ENCODE measurements at regions of chr17 and their contacts with region 1.

Region 1: GRCh38 chr17:38421171-38421841 is 7.0 kb upstream of the ARHGAP23 start:
- DNase-seq: no peak
- H3K4me3 Mint-ChIP-seq: no peak overlapping the region
- H3K27ac Mint-ChIP-seq: no peak overlapping the region
- H3K4me1 Mint-ChIP-seq: peaks cover 29% of the 10 kb centered on the region
- H3K27me3 Mint-ChIP-seq: peaks cover 98% of the 10 kb centered on the region
- CTCF ChIP-seq: no peak

Region 2: GRCh38 chr17:38434178-38434665 is 12.9 kb after region 1 on chr17:
- CTCF ChIA-PET with region 1: interaction called, 10 read pairs
- intact Hi-C with region 1: no loop called
- DNase-seq: no peak
- H3K4me3 Mint-ChIP-seq: no peak overlapping the region
- H3K27ac Mint-ChIP-seq: no peak overlapping the region
- H3K4me1 Mint-ChIP-seq: no peaks in the 10 kb centered on the region
- H3K27me3 Mint-ChIP-seq: peaks cover 53% of the 10 kb centered on the region
- CTCF ChIP-seq: no peak

Region 3: GRCh38 chr17:38444151-38444550 is 22.8 kb after region 1 on chr17:
- CTCF ChIA-PET with region 1: interaction called, 24 read pairs
- intact Hi-C with region 1: loop called (anchors 1 kb)
- DNase-seq: peak; percentile 96
- H3K4me3 Mint-ChIP-seq: peak overlapping the region; percentile 1
- H3K27ac Mint-ChIP-seq: no peak overlapping the region
- H3K4me1 Mint-ChIP-seq: peaks cover 36% of the 10 kb centered on the region
- H3K27me3 Mint-ChIP-seq: peaks cover 30% of the 10 kb centered on the region
- CTCF ChIP-seq: peak; percentile 100

Region 4: DNA sequence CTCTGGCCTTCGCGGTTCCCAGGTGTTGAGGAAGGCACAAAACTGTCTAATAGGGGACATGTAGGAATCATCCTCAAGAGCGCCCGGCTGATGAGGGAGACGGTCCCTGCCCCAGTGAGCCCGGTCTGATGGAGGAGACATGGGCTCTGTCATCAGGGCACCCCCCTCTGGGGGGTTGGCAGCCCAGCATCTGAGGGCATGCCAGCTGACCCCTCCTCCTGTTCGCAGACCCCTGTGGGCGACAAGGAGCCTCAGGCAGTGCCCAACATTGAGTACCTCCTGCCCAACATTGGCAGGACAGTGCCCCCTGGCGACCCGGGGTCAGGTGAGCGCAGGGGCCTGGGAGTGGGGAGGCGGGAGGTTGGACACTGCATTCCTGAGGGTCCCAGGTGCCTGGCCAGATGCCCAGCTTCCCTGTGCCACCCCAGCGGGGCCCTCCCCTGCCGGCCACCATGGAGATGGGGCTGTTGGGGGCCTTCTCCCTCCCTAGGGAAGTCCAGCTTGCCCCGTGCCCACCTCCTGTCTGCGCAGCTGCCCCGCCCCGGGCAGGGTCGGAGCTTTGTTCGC is 77.0 kb after region 1 on chr17:
- CTCF ChIA-PET with region 1: no interaction called
- intact Hi-C with region 1: loop called (anchors 2 kb)
- DNase-seq: no peak
- H3K4me3 Mint-ChIP-seq: no peak overlapping the region
- H3K27ac Mint-ChIP-seq: no peak overlapping the region
- H3K4me1 Mint-ChIP-seq: no peaks in the 10 kb centered on the region
- H3K27me3 Mint-ChIP-seq: no peaks in the 10 kb centered on the region
- CTCF ChIP-seq: peak; percentile 41

Measured in Calu3 (cell line).